Activated T-helper 2 cell treated with anti-CD3 and anti-CD28 coated beads, Interferon-gamma antibody, Interleukin-2, Interleukin-4, amounts not matched to agents 10 μg/mL and 5 μg/mL and 100 μg/mL, durations not matched to agents 14 hours and 24 hours and 36 hours (primary cell): ENCODE measurements at regions of chr11 and their contacts with region 1.

Region 1: GRCh38 chr11:130314750-130315285 is at the start of gene ZBTB44:
- DNase-seq: peak; percentile 84
- H3K4me3 Mint-ChIP-seq: peak within 1 kb of the TSS; percentile 95
- H3K27ac Mint-ChIP-seq: peak within 1 kb of the TSS; percentile 94
- H3K4me1 Mint-ChIP-seq: peaks cover 48% of the 10 kb centered on the region
- H3K27me3 Mint-ChIP-seq: no peaks in the 10 kb centered on the region
- total RNA-seq, gene ZBTB44: 36.0 and 36.1 TPM in 2 replicates

Region 2: GRCh38 chr11:130002846-130003716 is 311.7 kb before region 1 on chr11:
- intact Hi-C with region 1: loop called (anchors 1 kb)
- DNase-seq: peak; percentile 90
- H3K4me3 Mint-ChIP-seq: peak overlapping the region; percentile 98
- H3K27ac Mint-ChIP-seq: peak overlapping the region; percentile 100
- H3K4me1 Mint-ChIP-seq: peaks cover 30% of the 10 kb centered on the region
- H3K27me3 Mint-ChIP-seq: peaks cover 6% of the 10 kb centered on the region

Region 3: GRCh38 chr11:130246738-130247137 is 68.1 kb before region 1 on chr11:
- intact Hi-C with region 1: loop called (anchors 2 kb)
- DNase-seq: no peak
- H3K4me3 Mint-ChIP-seq: no peak overlapping the region
- H3K27ac Mint-ChIP-seq: peak overlapping the region; percentile 54
- H3K4me1 Mint-ChIP-seq: peaks cover 38% of the 10 kb centered on the region
- H3K27me3 Mint-ChIP-seq: no peaks in the 10 kb centered on the region

Region 4: DNA sequence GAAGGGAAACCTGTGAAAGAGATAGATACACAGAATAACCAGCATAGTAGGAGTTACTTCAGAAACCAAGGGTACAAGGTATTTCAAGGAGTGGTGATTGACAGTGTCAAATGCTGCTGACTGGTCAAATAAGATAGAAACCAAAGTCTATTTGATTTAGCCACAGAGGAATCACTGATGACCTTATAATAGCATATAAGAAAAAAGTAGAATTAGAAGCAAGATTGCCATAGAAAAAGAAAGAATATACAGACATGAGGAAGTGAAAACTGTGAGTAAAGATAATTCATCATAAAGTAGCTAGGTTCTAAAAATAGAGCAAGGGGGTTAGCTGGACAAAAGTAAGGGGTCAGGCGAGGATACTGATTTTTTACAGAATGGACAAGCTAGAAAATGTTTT is 14.3 kb before region 1 on chr11:
- intact Hi-C with region 1: loop called (anchors 1 kb)
- DNase-seq: no peak
- H3K4me3 Mint-ChIP-seq: no peak overlapping the region
- H3K27ac Mint-ChIP-seq: no peak overlapping the region
- H3K4me1 Mint-ChIP-seq: peaks cover 35% of the 10 kb centered on the region
- H3K27me3 Mint-ChIP-seq: no peaks in the 10 kb centered on the region

Region 5: GRCh38 chr11:130403271-130403804 is 88.5 kb after region 1 on chr11:
- intact Hi-C with region 1: no loop called
- DNase-seq: no peak
- H3K4me3 Mint-ChIP-seq: no peak overlapping the region
- H3K27ac Mint-ChIP-seq: no peak overlapping the region
- H3K4me1 Mint-ChIP-seq: peaks cover 5% of the 10 kb centered on the region
- H3K27me3 Mint-ChIP-seq: peaks cover 21% of the 10 kb centered on the region

Region 6: DNA sequence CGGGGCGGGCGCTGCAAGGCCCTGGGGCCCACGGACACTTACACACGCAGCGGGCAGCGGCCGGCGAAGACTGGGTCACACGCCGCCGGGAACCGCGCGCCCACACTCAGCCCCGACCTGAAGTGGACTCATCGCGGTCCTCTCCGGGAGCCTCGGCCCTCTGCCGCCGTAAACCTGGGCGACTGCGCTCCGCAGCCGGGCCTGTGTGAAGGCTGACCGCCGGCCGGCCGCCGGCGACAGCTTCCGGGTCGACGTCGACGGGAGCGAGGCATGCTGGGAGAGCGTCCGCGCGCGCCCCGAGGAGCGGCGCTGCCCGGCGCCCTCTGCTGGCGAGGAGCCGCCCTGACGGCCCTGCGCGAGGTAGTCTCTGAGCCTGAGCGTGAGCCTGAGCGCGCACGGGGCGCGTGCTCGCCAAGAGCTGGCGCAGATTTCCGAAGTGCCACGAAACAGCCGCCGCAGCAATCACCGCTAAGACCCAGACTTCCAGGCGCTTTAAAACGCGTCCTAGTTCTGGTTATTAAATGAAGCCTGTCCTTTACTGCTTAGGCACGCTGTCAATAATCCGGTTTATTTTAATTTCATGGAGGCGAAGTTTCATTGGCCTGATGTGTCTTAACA is 601.5 kb after region 1 on chr11 and contains the start of gene SNX19:
- intact Hi-C with region 1: loop called (anchors 2 kb)
- DNase-seq: peak; percentile 89
- H3K4me3 Mint-ChIP-seq: peak within 1 kb of the TSS; percentile 81
- H3K27ac Mint-ChIP-seq: peak within 1 kb of the TSS; percentile 63
- H3K4me1 Mint-ChIP-seq: peaks cover 32% of the 10 kb centered on the region
- H3K27me3 Mint-ChIP-seq: peaks cover 9% of the 10 kb centered on the region
- total RNA-seq, gene SNX19: 42.1 and 48.7 TPM in 2 replicates